Motor neuron (in vitro differentiated cells): ENCODE measurements at regions of chr16 and their contacts with region 1.

Region 1: DNA sequence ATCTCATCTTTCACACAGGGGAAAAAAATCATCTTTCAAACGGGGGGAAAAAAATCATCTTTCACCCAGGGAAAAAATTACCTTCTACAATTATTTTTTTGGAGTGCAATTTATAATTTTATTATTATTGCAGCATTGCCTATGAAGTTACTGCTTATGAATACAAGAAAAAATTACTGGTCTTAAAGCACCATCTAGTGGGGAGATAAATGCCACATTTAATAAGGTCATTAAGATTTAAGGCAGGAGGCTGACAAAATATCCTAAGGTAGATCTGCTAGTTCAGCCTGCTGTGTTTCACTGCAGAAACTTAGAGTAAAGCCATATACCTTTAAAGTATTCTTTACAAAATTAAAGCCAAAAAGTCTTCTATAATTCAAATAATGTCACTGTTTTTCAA is 13.7 kb downstream of the SHCBP1 start:
- ATAC-seq: peak in 3 of 8 experiments; percentile 61 to 73 (median 67)
- H3K4me3 ChIP-seq: no peak overlapping the region
- H3K27ac ChIP-seq: no peak overlapping the region
- H3K4me1 ChIP-seq: no peaks in the 10 kb centered on the region

Region 2: GRCh38 chr16:46555951-46556350 is 51.6 kb before region 1 on chr16:
- in situ Hi-C with region 1: loop called in 1 of 9 experiments (anchors 10 kb)
- ATAC-seq: peak in 2 of 8 experiments; percentile 57 to 77
- H3K4me3 ChIP-seq: no peak overlapping the region
- H3K27ac ChIP-seq: no peak overlapping the region
- H3K4me1 ChIP-seq: no peaks in the 10 kb centered on the region

Region 3: GRCh38 chr16:46673320-46674013 is 65.9 kb after region 1 on chr16:
- in situ Hi-C with region 1: no loop called
- ATAC-seq: peak; percentile 58 to 99 (median 86)
- H3K4me3 ChIP-seq: no peak overlapping the region
- H3K27ac ChIP-seq: no peak overlapping the region
- H3K4me1 ChIP-seq: no peaks in the 10 kb centered on the region